ENCODE measurements at regions of chr7 and their contacts with region 1.

Region 1: GRCh38 chr7:23712368-23713284 is 2.6 kb downstream of the STK31 start:
- DNase-seq: no peak
- H3K4me3 ChIP-seq: no peak overlapping the region
- H3K27ac ChIP-seq: no peak overlapping the region
- H3K4me1 ChIP-seq: no peaks in the 10 kb centered on the region
- H3K27me3 ChIP-seq: no peaks in the 10 kb centered on the region
- CTCF ChIP-seq: peak in 2 of 3 experiments; percentile 39 to 66; a peak in 2 of 4 replicates
- EP300 ChIP-seq: no peak
- POLR2A ChIP-seq: no peak
- RAD21 ChIP-seq: peak; percentile 89 to 92

Region 2: GRCh38 chr7:23546897-23547572 is 165.6 kb before region 1 on chr7:
- CTCF ChIA-PET with region 1: interaction called, 26 read pairs
- POLR2A ChIA-PET with region 1: interaction called, 4 read pairs
- DNase-seq: peak; percentile 75 to 79
- H3K4me3 ChIP-seq: no peak overlapping the region
- H3K27ac ChIP-seq: no peak overlapping the region
- H3K4me1 ChIP-seq: no peaks in the 10 kb centered on the region
- H3K27me3 ChIP-seq: no peaks in the 10 kb centered on the region
- CTCF ChIP-seq: peak; percentile 49 to 97 (median 91)
- EP300 ChIP-seq: 0 out of 3 replicates have a peak, but pooled peaks of 1 of the 2 experiments have one; percentile 25
- POLR2A ChIP-seq: no peak
- RAD21 ChIP-seq: peak; percentile 90 to 94

Region 3: DNA sequence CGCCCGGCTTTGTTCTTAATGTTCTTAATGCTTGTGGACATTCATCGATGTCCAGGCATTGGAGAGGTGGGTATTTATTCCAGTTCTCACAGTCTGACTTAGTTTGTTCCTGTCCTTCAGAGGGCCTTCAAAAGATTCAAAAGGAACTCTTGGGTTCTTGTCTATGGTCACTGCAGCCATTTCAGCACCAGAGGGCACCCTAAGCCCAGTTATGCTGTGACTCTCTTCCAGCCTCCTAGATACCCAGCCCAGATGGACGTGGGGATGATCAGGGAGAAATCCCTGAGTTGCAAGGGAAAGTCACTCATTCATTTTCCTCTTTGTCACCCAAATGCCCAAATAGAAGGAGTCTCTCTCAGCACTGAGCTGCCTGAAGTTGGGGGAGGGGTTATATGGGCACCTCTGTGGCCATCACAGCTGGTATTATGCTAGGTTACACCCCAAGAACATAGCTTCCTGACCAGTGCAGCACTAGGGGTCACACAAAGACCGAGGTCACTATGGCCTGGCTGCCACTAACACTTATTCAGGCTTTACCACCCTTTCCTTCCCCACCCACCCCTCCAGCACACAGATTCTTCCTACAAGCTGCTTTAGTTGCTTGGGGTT is 141.9 kb before region 1 on chr7:
- CTCF ChIA-PET with region 1: interaction called, 90 read pairs
- POLR2A ChIA-PET with region 1: no interaction called
- DNase-seq: peak; percentile 58 to 88
- H3K4me3 ChIP-seq: no peak overlapping the region
- H3K27ac ChIP-seq: no peak overlapping the region
- H3K4me1 ChIP-seq: no peaks in the 10 kb centered on the region
- H3K27me3 ChIP-seq: no peaks in the 10 kb centered on the region
- CTCF ChIP-seq: peak; percentile 65 to 94 (median 92)
- EP300 ChIP-seq: no peak
- POLR2A ChIP-seq: no peak
- RAD21 ChIP-seq: peak; percentile 98 to 99

Region 4: DNA sequence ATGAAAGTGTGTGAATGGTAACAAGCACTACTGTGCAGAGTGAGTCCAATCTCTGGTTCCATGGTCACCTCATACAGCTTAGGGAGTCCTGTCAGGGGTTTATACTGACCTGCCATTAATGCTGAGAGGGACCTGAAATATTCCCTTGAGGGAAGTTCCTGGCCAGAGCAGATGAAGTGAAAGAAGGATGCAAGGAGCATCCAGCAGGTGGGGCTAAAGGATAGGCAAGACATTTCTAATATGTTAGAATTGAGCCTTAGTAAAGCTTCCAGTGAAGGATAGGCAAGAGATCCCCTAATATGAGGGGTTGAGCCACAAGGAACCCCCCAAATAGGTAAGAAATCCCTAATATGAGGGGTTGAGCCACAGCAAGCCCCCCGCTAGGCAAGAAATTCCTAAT is 58.1 kb before region 1 on chr7:
- CTCF ChIA-PET with region 1: interaction called, 74 read pairs
- POLR2A ChIA-PET with region 1: interaction called, 4 read pairs
- DNase-seq: peak in 1 of 2 experiments; percentile 79
- H3K4me3 ChIP-seq: no peak overlapping the region
- H3K27ac ChIP-seq: no peak overlapping the region
- H3K4me1 ChIP-seq: peaks cover 0 to 2% (median 0%) of the 10 kb centered on the region in 4 experiments; a peak in 2 of 7 replicates
- H3K27me3 ChIP-seq: no peaks in the 10 kb centered on the region
- CTCF ChIP-seq: peak; percentile 3 to 79 (median 73)
- EP300 ChIP-seq: no peak
- POLR2A ChIP-seq: no peak
- RAD21 ChIP-seq: peak; percentile 96

Region 5: DNA sequence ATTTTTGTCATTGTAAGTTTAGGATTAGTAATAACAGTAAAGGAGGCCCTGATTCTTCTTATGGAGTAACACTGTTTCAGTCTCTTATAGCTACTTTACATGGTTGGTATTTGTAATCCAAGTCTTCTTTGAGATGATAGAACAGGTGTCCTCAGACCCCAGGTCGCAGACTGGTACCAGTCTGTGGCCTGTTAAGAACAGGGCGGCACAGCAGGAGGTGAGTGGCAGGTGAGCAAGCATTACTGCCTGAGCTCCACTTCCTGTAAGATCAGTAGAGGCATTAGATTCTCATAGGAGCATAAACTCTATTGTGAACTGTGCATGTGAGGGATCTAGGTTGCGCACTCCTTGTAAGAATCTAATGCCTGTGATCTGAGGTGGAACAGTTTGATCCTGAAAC is 74.6 kb after region 1 on chr7:
- CTCF ChIA-PET with region 1: no interaction called
- POLR2A ChIA-PET with region 1: no interaction called
- DNase-seq: no peak
- H3K4me3 ChIP-seq: no peak overlapping the region
- H3K27ac ChIP-seq: no peak overlapping the region
- H3K4me1 ChIP-seq: no peaks in the 10 kb centered on the region
- H3K27me3 ChIP-seq: no peaks in the 10 kb centered on the region
- CTCF ChIP-seq: no peak
- EP300 ChIP-seq: no peak
- POLR2A ChIP-seq: no peak
- RAD21 ChIP-seq: no peak